PC-9 (cell line): ENCODE measurements at regions of chr7 and their contacts with region 1.

Region 1: DNA sequence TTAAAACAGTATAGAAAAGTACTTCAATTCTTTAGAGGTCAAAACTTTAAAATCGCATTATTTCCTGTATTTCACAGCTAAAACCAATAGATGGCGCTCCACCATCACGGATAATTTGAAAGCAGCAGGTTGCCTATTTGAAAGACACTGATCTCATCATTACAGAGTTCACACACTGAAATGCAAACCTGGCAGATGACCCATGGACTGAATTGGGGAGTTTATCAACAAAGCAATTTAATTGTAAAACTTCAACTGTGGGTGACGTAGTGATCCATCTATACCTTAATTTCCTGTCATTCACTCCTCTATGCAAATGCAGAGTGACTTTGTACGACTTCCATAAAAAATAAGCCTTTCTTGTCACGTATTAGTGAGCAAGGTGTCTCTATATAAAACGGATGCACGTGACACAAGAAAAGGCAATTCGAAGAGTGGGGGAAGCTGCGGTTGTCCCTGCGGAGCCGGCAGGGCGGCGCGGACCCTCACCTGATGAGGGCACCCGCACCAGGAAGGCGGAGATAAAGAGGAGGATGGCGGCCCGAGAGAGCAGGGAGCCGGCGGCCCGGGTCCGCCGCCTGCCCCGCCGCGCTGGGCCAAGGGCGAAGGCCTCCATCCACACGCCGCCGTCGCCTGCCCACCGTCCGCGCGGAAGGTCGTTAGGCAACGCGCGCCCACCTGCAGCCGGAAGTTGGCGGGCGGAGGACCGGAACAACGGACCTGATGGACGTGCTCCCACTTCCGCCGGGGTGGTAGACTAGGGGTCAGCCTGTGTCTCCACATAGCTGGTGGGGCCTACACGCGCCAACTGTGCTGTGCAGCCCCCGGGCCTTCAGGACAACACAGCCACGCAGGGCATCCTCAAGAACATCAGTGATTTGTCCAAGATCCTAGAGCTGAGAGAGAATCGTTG is at the start of gene ZPBP:
- DNase-seq: no peak
- H3K4me3 ChIP-seq: no peak within 1 kb of the TSS
- H3K27ac ChIP-seq: no peak within 1 kb of the TSS
- H3K4me1 ChIP-seq: no peaks in the 10 kb centered on the region
- H3K27me3 ChIP-seq: peaks cover 8% of the 10 kb centered on the region; the same call in 1 of the 2 replicates
- CTCF ChIP-seq: peak; percentile 94
- total RNA-seq, gene ZPBP: not detected in 2 replicates

Region 2: GRCh38 chr7:50182759-50183158 is 89.9 kb after region 1 on chr7:
- CTCF ChIA-PET with region 1: no interaction called
- POLR2A ChIA-PET with region 1: no interaction called
- intact Hi-C with region 1: no loop called
- DNase-seq: no peak
- H3K4me3 ChIP-seq: no peak overlapping the region
- H3K27ac ChIP-seq: no peak overlapping the region
- H3K4me1 ChIP-seq: no peaks in the 10 kb centered on the region
- H3K27me3 ChIP-seq: peaks cover 90% of the 10 kb centered on the region
- CTCF ChIP-seq: no peak

Region 3: GRCh38 chr7:51090411-51090810 is 997.6 kb after region 1 on chr7:
- CTCF ChIA-PET with region 1: no interaction called
- POLR2A ChIA-PET with region 1: no interaction called
- intact Hi-C with region 1: loop called (anchors 5 kb)
- DNase-seq: no peak
- H3K4me3 ChIP-seq: no peak overlapping the region
- H3K27ac ChIP-seq: no peak overlapping the region
- H3K4me1 ChIP-seq: no peaks in the 10 kb centered on the region
- H3K27me3 ChIP-seq: no peaks in the 10 kb centered on the region
- CTCF ChIP-seq: no peak